Mammary epithelial cell (primary cell): ENCODE measurements at regions of chr4 and their contacts with region 1.

Region 1: GRCh38 chr4:152634110-152634760 is 45.6 kb downstream of the TMEM154 start:
- DNase-seq: peak; percentile 90
- H3K4me3 ChIP-seq: no peak overlapping the region
- H3K27ac ChIP-seq: peak overlapping the region; percentile 92
- H3K4me1 ChIP-seq: peaks cover 28% of the 10 kb centered on the region
- H3K27me3 ChIP-seq: no peaks in the 10 kb centered on the region
- CTCF ChIP-seq: no peak

Region 2: DNA sequence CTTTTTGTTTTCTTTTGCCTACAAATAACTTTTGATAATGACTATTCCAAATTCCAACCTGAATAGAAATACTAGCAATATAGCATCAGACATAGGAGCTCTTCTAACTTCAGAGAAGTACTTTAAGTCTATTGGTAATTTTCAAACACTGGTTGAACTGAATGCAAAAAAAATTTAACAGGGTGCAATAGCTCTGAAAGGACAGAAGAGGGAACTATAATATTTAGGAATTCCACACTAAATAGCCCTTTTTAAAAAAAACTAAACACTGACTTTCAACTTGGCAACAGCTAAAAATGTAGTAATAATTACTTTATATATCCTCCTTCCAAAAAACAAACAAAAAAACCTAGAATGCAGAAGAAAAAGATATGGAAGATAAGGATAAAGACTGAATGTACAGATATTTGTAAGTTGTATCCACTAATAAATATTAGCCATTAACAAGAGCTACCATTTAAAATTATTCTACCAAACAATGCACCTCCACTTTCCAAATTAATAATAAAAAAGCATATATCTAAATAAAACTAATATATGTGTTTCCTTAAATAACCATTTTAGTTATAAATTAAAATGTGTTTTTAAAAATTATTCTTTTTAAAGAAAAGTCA is 179.7 kb before region 1 on chr4:
- CTCF ChIA-PET with region 1: no interaction called
- dilution Hi-C with region 1: no loop called
- in situ Hi-C with region 1: no loop called
- intact Hi-C with region 1: loop called (anchors 5 kb)
- DNase-seq: peak; percentile 24
- H3K4me3 ChIP-seq: no peak overlapping the region
- H3K27ac ChIP-seq: no peak overlapping the region
- H3K4me1 ChIP-seq: no peaks in the 10 kb centered on the region
- H3K27me3 ChIP-seq: no peaks in the 10 kb centered on the region
- CTCF ChIP-seq: peak; percentile 61 to 78

Region 3: DNA sequence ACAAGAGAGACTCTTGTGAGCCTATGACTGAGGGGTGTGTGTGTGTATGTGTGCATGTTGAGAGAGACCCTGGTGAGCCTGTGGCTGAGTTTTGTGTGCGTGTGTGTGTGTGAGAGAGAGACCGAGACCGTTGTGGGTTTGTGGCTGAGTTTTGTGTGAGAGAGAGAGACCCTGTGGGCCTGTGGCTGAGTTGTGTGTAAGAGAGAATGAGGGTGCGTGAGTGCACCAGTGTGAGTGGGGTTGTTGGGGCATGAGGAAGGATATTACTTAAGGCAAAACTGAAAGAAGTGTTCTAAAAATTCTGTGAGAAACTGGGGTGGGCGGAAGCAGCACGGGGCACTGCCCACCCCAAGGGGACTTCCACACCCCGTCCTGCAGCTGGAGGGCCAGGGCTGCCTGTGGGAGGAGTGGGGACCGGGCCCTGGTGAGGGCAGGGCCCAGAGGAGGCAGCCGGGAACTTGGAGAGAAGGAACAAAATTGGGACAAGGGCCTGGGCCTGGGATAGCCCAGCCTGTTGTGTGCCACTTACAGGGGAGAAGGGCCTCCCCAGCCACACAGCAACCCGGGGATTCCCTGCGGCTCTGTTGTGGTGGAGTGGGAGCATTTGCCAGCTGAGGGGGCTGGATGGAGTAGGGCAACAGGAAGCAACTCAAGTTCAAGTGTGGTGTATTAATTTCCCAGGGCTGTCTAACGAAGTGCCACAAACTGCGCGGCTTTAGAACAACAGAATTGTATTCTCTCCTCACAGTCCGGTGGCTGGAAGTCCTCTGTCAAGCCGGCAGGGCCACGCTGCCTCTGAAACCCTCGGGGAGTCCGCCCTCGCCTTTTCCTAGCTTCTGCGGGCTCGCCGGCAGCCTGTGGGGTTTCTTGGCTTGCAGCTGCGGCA is 854.0 kb after region 1 on chr4:
- CTCF ChIA-PET with region 1: no interaction called
- dilution Hi-C with region 1: no loop called
- in situ Hi-C with region 1: no loop called
- intact Hi-C with region 1: no loop called
- DNase-seq: peak; percentile 69
- H3K4me3 ChIP-seq: peak overlapping the region; percentile 9 to 17 (median 16)
- H3K27ac ChIP-seq: peak overlapping the region; percentile 75
- H3K4me1 ChIP-seq: peaks cover 64% of the 10 kb centered on the region
- H3K27me3 ChIP-seq: no peaks in the 10 kb centered on the region
- CTCF ChIP-seq: no peak